Common myeloid progenitor, CD34-positive (primary cell): ENCODE measurements at regions of chr19 and their contacts with region 1.

Region 1: DNA sequence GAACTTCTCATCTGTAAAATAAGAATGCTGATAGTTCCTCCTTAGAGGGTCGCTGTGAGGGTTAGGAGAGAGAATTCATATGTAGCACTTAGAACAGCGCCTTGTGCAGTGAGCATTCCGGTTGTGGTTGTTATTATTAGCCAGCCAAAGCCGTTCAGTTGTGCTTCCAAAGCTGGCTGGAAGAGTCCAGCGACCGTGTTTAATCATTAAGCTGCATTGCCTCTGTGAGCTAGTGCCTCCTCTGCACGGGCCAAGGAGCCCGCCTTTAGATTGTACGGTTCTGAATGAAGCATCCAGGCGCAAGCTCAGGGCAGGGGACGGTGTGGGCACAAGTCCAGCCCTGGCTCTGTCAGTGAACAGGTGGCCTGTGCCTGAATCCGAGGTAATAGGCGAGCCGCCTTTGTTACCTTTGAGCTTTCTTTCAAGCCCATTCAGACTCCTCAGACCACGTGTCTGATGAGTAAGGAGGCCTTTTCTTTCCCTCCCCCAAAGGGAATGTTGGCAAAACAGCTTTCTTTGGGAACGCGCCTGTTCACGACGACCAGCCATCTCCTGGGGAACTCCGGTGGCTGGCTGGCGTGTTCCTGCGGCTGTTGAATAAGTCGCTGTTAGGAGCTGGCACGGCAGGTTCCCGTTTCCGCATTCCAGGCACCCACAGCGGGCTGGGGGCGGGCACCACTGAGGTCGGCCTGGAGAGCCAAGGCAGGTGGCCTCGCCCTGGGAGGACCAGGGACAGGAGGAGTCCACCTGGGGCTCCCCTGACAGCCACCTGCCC is 25.1 kb downstream of the SIPA1L3 start:
- DNase-seq: peak; percentile 57 to 84 (median 82)
- H3K4me3 ChIP-seq: peak overlapping the region in 6 of 7 experiments; percentile 51 to 73 (median 59)
- H3K27ac ChIP-seq: peak overlapping the region; percentile 70 to 84
- H3K4me1 ChIP-seq: peaks cover 10 to 67% (median 59%) of the 10 kb centered on the region in 4 experiments
- H3K27me3 ChIP-seq: no peaks in the 10 kb centered on the region

Region 2: DNA sequence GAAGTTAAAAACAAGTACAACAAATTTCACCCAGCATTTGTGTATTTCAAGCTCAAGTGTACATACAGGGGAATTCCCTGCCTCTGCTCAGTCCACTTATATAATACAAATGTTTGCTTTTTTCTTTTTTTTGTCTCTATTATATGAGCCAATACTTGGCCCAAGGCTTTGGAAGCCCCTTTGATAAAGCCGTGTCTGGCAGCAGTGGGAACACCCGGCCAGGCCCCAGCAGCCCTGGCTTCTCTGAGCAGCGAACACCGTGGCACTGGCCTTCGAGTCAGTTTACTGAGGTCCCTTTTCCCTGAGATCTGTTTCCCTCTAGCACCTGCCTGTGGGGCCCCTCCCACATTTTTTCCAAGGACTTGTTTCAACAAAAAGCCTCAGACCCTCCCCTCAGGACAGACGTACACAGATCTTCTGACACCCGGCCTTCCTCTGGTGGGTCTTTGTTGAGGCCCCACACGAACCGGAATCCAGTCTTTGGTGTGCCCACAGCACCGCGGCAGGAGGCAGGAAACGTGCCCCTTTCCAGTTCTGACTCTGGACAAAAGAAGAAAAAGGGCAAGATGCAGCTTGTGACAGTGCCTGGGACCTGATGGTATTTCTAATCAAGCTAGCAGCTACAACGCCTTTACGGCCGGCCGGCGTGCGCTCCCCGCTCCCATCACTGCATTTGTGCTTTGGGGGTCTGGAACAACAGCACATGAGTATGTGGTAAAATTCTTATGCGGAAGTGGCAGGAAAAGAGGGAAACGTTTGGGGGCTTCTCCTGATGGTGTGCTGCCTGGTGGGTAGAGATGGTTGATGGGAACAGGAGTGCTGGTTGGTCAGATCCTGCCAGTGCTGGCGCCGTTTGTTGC is 11.2 kb before region 1 on chr19:
- CTCF ChIA-PET with region 1: interaction called, 16 read pairs
- POLR2A ChIA-PET with region 1: no interaction called
- DNase-seq: peak in 2 of 3 donors; percentile 47 to 51
- H3K4me3 ChIP-seq: peak overlapping the region in 6 of 7 experiments; percentile 26 to 52 (median 40)
- H3K27ac ChIP-seq: peak overlapping the region; percentile 64 to 81
- H3K4me1 ChIP-seq: peaks cover 0 to 23% (median 19%) of the 10 kb centered on the region in 4 experiments
- H3K27me3 ChIP-seq: no peaks in the 10 kb centered on the region

Region 3: DNA sequence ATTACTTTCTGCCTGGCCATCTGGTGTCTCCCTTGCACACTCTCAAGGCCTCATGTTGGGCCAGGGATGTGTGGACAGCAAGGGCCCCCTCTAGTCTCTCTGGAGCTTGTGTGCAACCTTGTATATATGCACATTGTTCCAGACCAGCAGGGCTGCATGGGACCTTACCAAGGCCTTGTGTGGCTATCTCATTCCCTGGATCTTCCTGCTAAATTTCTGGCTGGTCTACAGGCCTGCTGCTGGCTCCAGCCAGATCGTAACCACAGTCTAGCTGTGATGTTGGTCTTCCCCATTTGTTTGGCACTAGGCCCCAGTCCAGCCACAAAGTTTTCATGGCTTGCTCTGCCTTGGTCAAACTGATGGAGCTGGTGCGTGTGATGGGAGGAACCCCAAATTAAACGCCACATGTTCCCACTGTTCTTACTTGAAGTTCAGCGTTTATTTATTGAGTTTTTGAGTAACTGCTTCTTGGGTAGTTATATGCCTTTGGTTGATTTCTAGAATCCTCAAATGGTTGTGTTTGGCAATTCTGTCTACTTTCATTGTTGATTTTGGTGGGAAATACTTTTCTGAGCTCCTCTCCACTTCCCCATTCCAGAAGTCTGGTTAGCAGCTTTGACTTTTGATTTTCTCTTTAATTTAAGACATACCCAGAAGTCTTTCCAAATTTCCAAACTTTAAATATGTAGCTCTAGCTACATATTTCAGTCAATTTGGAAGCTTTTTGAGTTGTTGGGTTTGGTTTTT is 31.3 kb after region 1 on chr19:
- CTCF ChIA-PET with region 1: no interaction called
- POLR2A ChIA-PET with region 1: no interaction called
- DNase-seq: peak in 2 of 3 donors; percentile 29 to 39
- H3K4me3 ChIP-seq: no peak overlapping the region
- H3K27ac ChIP-seq: peak overlapping the region in 1 of 2 experiments; percentile 4
- H3K4me1 ChIP-seq: peaks cover 0 to 19% (median 7%) of the 10 kb centered on the region in 4 experiments
- H3K27me3 ChIP-seq: no peaks in the 10 kb centered on the region